Activated B cell treated with CpG ODN at 0.5 μM for 24 hours (primary cell): ENCODE measurements at regions of chr22 and their contacts with region 1.

Region 1: GRCh38 chr22:41140365-41140957 is 48.1 kb downstream of the EP300 start:
- DNase-seq: no peak
- ATAC-seq: no peak
- H3K4me3 Mint-ChIP-seq: no peak overlapping the region
- H3K27ac Mint-ChIP-seq: no peak overlapping the region
- H3K4me1 Mint-ChIP-seq: no peaks in the 10 kb centered on the region
- H3K27me3 Mint-ChIP-seq: no peaks in the 10 kb centered on the region
- CTCF ChIP-seq: no peak

Region 2: DNA sequence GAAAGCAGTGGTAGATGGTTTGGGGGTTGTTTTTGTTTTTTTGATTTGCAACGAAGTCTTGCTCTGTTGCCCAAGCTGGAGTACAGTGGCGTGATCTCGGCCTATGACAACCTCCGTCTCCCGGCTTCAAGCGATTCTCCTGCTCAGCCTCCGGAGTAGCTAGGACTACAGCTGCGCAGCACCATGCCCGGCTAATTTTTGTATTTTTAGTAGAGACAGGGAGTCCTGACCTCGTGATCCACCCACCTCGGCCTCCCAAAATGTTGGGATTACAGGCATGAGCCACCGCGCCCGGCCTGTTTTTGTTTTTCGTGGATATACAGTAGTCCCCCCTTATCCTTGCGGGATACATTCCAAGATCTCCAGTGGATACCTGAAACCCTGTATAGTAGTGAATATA is 41.4 kb before region 1 on chr22:
- CTCF ChIA-PET with region 1: no interaction called
- POLR2A ChIA-PET with region 1: no interaction called
- intact Hi-C with region 1: loop called (anchors 5 kb)
- DNase-seq: no peak
- ATAC-seq: no peak
- H3K4me3 Mint-ChIP-seq: no peak overlapping the region
- H3K27ac Mint-ChIP-seq: no peak overlapping the region
- H3K4me1 Mint-ChIP-seq: peaks cover 84% of the 10 kb centered on the region
- H3K27me3 Mint-ChIP-seq: no peaks in the 10 kb centered on the region
- CTCF ChIP-seq: no peak